Left colon (tissue), 2 donors: ENCODE measurements at regions of chr6 and their contacts with region 1.

Region 1: GRCh38 chr6:139364302-139364981 is 10.0 kb downstream of the CITED2 start:
- DNase-seq: no peak
- ATAC-seq: peak; percentile 49

Region 2: GRCh38 chr6:138817822-138818308 is 546.6 kb before region 1 on chr6:
- intact Hi-C with region 1: loop called in 1 of 2 experiments (anchors 5 kb)
- DNase-seq: peak; percentile 84 to 91
- ATAC-seq: peak; percentile 94

Region 3: GRCh38 chr6:139124887-139125672 is 239.4 kb before region 1 on chr6:
- intact Hi-C with region 1: loop called in 1 of 2 experiments (anchors 5 kb)
- DNase-seq: peak; percentile 70 to 75
- ATAC-seq: peak; percentile 100

Region 4: GRCh38 chr6:139219271-139219729 is 145.1 kb before region 1 on chr6:
- intact Hi-C with region 1: loop called in 1 of 2 experiments (anchors 5 kb)
- DNase-seq: peak; percentile 75 to 82
- ATAC-seq: peak; percentile 98

Region 5: GRCh38 chr6:139416146-139416545 is 51.7 kb after region 1 on chr6:
- intact Hi-C with region 1: no loop called
- DNase-seq: no peak
- ATAC-seq: no peak

Region 6: GRCh38 chr6:140921366-140922226 is 1557.2 kb after region 1 on chr6:
- intact Hi-C with region 1: loop called in 1 of 2 experiments (anchors 10 kb)
- DNase-seq: no peak
- ATAC-seq: peak; percentile 85